ENCODE measurements at regions of chr1 and their contacts with region 1.

Region 1: DNA sequence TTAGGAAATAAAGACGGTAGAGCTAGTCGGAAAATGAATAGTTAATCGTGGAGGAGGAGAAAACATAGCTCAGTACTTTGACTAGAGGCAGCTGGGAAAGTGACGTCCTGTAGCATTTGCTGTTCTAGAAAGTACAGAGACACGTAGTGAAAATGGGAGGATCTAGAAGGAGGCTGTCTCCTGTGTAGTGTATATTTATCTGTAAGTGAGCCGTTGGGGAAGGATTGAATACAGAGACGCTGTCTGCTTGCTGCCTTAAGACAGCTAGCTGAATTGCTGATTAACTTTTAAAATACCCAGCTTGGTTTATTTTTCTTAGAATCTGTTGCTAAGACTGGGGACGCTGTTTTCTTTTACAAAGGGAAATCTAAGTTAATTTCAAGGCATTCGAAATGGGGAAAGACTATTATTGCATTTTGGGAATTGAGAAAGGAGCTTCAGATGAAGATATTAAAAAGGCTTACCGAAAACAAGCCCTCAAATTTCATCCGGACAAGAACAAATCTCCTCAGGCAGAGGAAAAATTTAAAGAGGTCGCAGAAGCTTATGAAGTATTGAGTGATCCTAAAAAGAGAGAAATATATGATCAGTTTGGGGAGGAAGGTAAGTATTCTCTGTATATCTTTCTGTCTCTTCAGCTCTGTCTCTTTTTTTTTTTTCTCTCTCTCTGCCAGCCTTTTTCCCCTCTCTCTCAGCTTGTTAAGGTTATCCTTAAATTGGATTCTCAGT is at the start of gene DNAJB4:
- DNase-seq: peak; percentile 70
- H3K4me3 Mint-ChIP-seq: peak within 1 kb of the TSS; percentile 87
- H3K27ac Mint-ChIP-seq: peak within 1 kb of the TSS; percentile 100
- H3K4me1 Mint-ChIP-seq: peaks cover 38% of the 10 kb centered on the region
- H3K27me3 Mint-ChIP-seq: peaks cover 3% of the 10 kb centered on the region
- total RNA-seq, gene DNAJB4: 9.1 to 10.8 TPM

Region 2: DNA sequence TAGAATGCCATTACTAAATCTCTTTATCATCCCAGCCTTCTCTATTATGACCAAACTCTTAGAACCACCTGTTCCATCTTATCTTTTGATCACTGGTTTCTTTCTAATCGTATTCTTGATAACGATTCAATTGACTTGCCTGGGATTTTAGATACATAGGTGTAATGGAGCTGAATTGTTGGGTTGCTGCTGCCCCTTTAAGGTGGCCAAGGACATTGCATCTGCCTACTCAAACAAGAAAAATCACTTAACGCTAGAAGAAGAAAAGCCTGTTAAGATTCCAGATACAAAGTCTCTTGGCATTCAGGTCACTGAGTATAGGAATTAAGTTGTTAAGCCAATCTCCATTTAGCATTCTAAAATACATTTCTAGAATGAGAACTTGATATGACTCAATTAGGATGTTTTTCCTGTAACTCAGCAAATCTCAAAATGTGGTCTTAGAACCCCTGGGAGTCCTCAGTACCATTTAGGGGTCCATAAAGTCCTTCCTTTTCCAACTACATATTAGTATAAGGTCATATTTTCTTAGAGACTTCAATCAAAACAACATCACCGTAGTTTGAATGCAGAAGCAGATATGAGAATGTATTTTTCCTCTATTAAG is 104.1 kb before region 1 on chr1:
- CTCF ChIA-PET with region 1: no interaction called
- POLR2A ChIA-PET with region 1: no interaction called
- intact Hi-C with region 1: no loop called
- DNase-seq: peak; percentile 27
- H3K4me3 Mint-ChIP-seq: no peak overlapping the region
- H3K27ac Mint-ChIP-seq: no peak overlapping the region
- H3K4me1 Mint-ChIP-seq: no peaks in the 10 kb centered on the region
- H3K27me3 Mint-ChIP-seq: no peaks in the 10 kb centered on the region

Region 3: DNA sequence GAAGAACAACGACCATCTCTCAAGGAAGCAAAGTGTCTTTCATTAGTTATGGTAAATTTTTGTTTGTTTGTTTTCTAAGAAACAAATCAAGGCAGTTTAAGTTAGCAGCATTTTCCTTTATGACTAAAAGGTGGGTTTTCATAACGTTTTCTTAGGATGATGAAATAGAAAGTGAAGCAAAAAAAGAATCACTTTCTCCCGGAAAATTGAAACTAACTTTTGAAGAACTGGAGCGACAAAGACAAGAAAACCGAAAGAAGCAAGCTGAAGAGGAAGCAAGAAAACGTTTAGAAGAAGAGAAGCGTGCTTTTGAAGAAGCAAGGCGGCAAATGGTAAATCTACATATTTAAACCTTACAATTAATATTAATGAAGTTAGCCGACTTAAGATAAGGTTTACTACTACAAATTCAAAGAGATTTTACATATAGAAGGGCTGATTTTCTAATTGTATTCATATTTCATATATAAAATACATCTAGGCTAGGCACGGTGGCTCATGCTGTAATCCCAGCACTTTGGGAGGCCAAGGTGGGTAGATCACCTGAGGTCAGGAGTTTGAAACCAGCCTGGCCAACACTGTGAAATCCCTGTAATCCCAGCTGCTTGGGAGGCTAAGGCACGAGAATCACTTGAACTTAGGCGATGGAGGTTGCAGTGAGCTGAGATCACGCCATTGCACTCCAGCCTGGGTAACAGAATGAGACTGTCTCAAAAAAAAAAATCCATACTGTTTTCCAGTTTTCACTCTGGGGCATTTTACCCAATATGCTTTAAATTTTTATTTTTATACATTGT is 78.1 kb before region 1 on chr1:
- CTCF ChIA-PET with region 1: no interaction called
- POLR2A ChIA-PET with region 1: no interaction called
- intact Hi-C with region 1: loop called (anchors 2 kb)
- DNase-seq: no peak
- H3K4me3 Mint-ChIP-seq: peak overlapping the region; percentile 57
- H3K27ac Mint-ChIP-seq: no peak overlapping the region
- H3K4me1 Mint-ChIP-seq: peaks cover 9% of the 10 kb centered on the region
- H3K27me3 Mint-ChIP-seq: no peaks in the 10 kb centered on the region

Region 4: GRCh38 chr1:77991638-77992037 is 13.2 kb before region 1 on chr1:
- CTCF ChIA-PET with region 1: interaction called, 4 read pairs
- POLR2A ChIA-PET with region 1: interaction called, 18 read pairs
- intact Hi-C with region 1: loop called (anchors 1 kb)
- DNase-seq: no peak
- H3K4me3 Mint-ChIP-seq: no peak overlapping the region
- H3K27ac Mint-ChIP-seq: no peak overlapping the region
- H3K4me1 Mint-ChIP-seq: peaks cover 28% of the 10 kb centered on the region
- H3K27me3 Mint-ChIP-seq: no peaks in the 10 kb centered on the region

Region 5: DNA sequence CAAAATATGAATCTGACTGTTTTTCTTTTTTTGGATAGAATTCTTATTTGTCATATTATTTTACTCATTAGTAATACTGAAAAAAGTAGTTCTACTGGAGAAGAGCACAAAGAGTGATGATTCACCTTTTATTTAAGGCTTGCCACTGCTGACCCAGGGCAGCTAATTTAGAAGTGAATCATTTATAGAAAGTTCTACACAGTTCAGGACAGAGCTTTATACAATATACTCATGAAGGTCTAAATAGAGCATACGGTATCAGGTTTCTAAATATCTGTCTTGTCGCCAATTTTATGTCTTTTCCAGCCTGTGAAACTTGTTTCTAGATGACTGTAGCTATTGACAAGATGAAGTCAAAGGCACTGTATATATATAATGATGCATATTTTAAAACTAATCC is 65.9 kb after region 1 on chr1:
- CTCF ChIA-PET with region 1: interaction called, 3 read pairs
- POLR2A ChIA-PET with region 1: interaction called, 4 read pairs
- intact Hi-C with region 1: loop called (anchors 2 kb)
- DNase-seq: no peak
- H3K4me3 Mint-ChIP-seq: no peak overlapping the region
- H3K27ac Mint-ChIP-seq: no peak overlapping the region
- H3K4me1 Mint-ChIP-seq: peaks cover 5% of the 10 kb centered on the region
- H3K27me3 Mint-ChIP-seq: peaks cover 9% of the 10 kb centered on the region

Region 6: GRCh38 chr1:78114034-78114956 is 109.4 kb after region 1 on chr1:
- CTCF ChIA-PET with region 1: interaction called, 34 read pairs
- POLR2A ChIA-PET with region 1: interaction called, 6 read pairs
- intact Hi-C with region 1: loop called (anchors 2 kb)
- DNase-seq: peak; percentile 69
- H3K4me3 Mint-ChIP-seq: no peak overlapping the region
- H3K27ac Mint-ChIP-seq: no peak overlapping the region
- H3K4me1 Mint-ChIP-seq: no peaks in the 10 kb centered on the region
- H3K27me3 Mint-ChIP-seq: no peaks in the 10 kb centered on the region